ENCODE measurements at regions of chr6 and their contacts with region 1.

Region 1: GRCh38 chr6:109382576-109383437 is 540 bp upstream of the CD164 start:
- DNase-seq: peak; percentile 94
- H3K4me3 ChIP-seq: peak overlapping the region; percentile 98
- H3K27ac ChIP-seq: peak overlapping the region; percentile 98 to 99
- H3K4me1 ChIP-seq: peaks cover 3% of the 10 kb centered on the region
- H3K27me3 ChIP-seq: no peaks in the 10 kb centered on the region
- CTCF ChIP-seq: peak in 3 of 4 experiments; percentile 73 to 84 (median 75)
- POLR2A ChIP-seq: peak; percentile 18

Region 2: GRCh38 chr6:109002051-109002697 is 380.6 kb before region 1 on chr6:
- intact Hi-C with region 1: loop called (anchors 5 kb)
- DNase-seq: peak; percentile 34
- H3K4me3 ChIP-seq: peak overlapping the region in 1 of 2 donors; percentile 7
- H3K27ac ChIP-seq: peak overlapping the region; percentile 77 to 81
- H3K4me1 ChIP-seq: peaks cover 9% of the 10 kb centered on the region
- H3K27me3 ChIP-seq: no peaks in the 10 kb centered on the region
- CTCF ChIP-seq: no peak
- POLR2A ChIP-seq: no peak

Region 3: GRCh38 chr6:109095027-109095834 is 287.6 kb before region 1 on chr6 and contains the start of gene CEP57L1:
- intact Hi-C with region 1: loop called (anchors 2 kb)
- DNase-seq: peak; percentile 93
- H3K4me3 ChIP-seq: peak within 1 kb of the TSS; percentile 50 to 72
- H3K27ac ChIP-seq: peak within 1 kb of the TSS; percentile 94 to 98
- H3K4me1 ChIP-seq: no peaks in the 10 kb centered on the region
- H3K27me3 ChIP-seq: no peaks in the 10 kb centered on the region
- CTCF ChIP-seq: peak in 1 of 4 experiments; percentile 16
- POLR2A ChIP-seq: no peak
- total RNA-seq, gene CEP57L1: 9.9 to 11.8 TPM

Region 4: DNA sequence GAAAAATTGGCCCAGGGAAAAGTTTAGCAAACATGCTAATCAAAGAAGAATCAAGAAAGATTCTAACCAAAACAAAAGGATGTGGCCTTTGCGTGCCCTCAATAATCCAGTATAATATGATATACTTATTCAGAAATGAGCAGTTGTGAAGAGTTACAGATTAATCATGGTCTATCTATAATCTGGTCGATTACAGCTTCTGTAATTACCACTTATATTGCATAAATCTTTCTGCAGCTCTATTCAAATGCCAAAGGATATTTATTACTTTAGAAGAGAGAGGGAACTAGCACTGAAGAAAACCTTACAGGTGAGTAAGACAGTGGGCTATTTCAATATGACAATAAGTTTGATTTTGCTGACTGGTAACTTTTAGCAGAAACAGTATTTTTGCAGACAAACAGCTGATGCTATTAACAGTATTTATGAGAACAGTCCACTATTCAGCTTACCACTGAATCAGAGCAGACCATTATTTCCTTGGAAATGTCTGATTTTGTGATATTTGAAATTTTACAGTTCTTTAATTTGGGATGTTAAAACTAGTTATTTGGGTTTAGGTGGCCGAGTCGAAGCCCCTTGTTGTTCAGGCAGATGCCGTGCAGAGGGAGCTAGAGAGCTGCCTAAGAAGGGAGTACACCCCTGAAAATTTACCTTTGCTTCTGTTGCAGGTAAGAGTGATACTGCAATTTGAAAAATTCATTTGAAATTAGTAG is 195.2 kb before region 1 on chr6:
- intact Hi-C with region 1: loop called (anchors 1 kb)
- DNase-seq: peak; percentile 39
- H3K4me3 ChIP-seq: no peak overlapping the region
- H3K27ac ChIP-seq: no peak overlapping the region
- H3K4me1 ChIP-seq: no peaks in the 10 kb centered on the region
- H3K27me3 ChIP-seq: no peaks in the 10 kb centered on the region
- CTCF ChIP-seq: peak; percentile 31 to 92 (median 76)
- POLR2A ChIP-seq: no peak

Region 5: GRCh38 chr6:109299776-109300564 is 82.8 kb before region 1 on chr6:
- intact Hi-C with region 1: loop called (anchors 2 kb)
- DNase-seq: peak; percentile 24
- H3K4me3 ChIP-seq: no peak overlapping the region
- H3K27ac ChIP-seq: peak overlapping the region; percentile 31 to 33
- H3K4me1 ChIP-seq: no peaks in the 10 kb centered on the region
- H3K27me3 ChIP-seq: no peaks in the 10 kb centered on the region
- CTCF ChIP-seq: no peak
- POLR2A ChIP-seq: no peak

Region 6: GRCh38 chr6:109440331-109441068 is 57.7 kb after region 1 on chr6 and contains the starts of genes PPIL6 and SMPD2:
- intact Hi-C with region 1: loop called (anchors 2 kb)
- DNase-seq: peak; percentile 86
- H3K4me3 ChIP-seq: peak within 1 kb of the TSS; percentile 46 to 58
- H3K27ac ChIP-seq: peak within 1 kb of the TSS; percentile 80 to 81
- H3K4me1 ChIP-seq: no peaks in the 10 kb centered on the region
- H3K27me3 ChIP-seq: no peaks in the 10 kb centered on the region
- CTCF ChIP-seq: peak in 3 of 4 experiments; percentile 9 to 37 (median 34)
- POLR2A ChIP-seq: peak; percentile 59
- total RNA-seq, gene PPIL6: 4.2 to 6.0 TPM
- total RNA-seq, gene SMPD2: 10.2 to 24.2 TPM

Region 7: DNA sequence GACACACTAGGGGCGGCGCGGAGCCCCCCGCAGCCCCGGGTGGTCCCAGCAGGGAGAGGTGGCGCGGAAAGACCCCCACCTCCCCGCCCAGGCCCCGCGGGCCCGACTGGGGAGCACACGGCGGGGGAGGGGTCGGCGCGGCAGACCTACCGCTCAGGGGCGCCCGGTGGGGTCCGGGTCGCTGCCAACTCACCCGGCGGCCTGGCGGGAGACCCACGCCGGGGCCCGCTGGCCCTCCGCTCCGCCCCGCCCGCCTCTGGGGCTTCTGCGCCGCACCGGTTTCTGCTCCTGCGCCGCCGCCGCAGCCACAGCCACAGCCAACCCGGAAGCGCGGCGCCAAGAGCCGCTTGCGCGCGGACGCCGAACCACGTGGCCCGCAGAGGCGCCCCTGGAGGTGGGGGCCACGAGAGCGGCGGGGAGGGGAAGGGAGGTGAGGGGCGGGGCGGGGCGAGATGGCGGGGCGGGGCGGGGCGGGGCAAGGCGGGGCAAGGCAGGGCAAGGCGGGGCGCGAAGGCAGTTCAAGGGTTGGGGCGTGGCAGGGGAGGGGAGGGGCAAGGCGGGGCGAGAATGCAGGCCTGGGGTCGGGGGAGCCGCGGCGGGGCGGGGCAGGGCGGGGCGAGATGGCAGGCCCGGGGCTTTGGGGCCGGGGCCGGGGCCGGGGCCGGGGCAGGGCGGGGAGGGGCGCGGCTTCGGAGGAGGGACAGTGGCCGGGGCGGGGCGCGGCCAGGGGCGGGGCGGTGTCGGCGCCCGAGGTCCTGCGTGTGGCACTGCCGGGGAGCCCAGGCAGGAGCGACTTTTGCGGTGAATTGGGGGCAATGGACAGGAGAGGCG is 100.3 kb after region 1 on chr6 and contains the start of gene ZBTB24:
- intact Hi-C with region 1: loop called (anchors 5 kb)
- DNase-seq: peak; percentile 91
- H3K4me3 ChIP-seq: peak within 1 kb of the TSS; percentile 97 to 99
- H3K27ac ChIP-seq: peak within 1 kb of the TSS; percentile 75 to 76
- H3K4me1 ChIP-seq: peaks cover 4% of the 10 kb centered on the region
- H3K27me3 ChIP-seq: no peaks in the 10 kb centered on the region
- CTCF ChIP-seq: peak in 2 of 4 experiments; percentile 4 to 8
- POLR2A ChIP-seq: peak; percentile 51
- total RNA-seq, gene ZBTB24: 8.2 to 12.8 TPM